CD4-positive, alpha-beta memory T cell (primary cell): ENCODE measurements at regions of chr10 and their contacts with region 1.

Region 1: GRCh38 chr10:13099666-13100348 is at the start of gene OPTN:
- DNase-seq: peak; percentile 82 to 90 (median 84)
- H3K4me3 ChIP-seq: peak within 1 kb of the TSS; percentile 58 to 65
- H3K4me3 Mint-ChIP-seq: peak within 1 kb of the TSS; percentile 89 to 95 (median 94)
- H3K27ac ChIP-seq: peak within 1 kb of the TSS; percentile 98
- H3K27ac Mint-ChIP-seq: peak within 1 kb of the TSS; percentile 95 to 98 (median 97)
- H3K4me1 ChIP-seq: peaks cover 49% of the 10 kb centered on the region
- H3K4me1 Mint-ChIP-seq: peaks cover 40 to 59% (median 48%) of the 10 kb centered on the region in 4 donors
- H3K27me3 ChIP-seq: no peaks in the 10 kb centered on the region
- H3K27me3 Mint-ChIP-seq: no peaks in the 10 kb centered on the region
- total RNA-seq, gene OPTN: 148 TPM

Region 2: DNA sequence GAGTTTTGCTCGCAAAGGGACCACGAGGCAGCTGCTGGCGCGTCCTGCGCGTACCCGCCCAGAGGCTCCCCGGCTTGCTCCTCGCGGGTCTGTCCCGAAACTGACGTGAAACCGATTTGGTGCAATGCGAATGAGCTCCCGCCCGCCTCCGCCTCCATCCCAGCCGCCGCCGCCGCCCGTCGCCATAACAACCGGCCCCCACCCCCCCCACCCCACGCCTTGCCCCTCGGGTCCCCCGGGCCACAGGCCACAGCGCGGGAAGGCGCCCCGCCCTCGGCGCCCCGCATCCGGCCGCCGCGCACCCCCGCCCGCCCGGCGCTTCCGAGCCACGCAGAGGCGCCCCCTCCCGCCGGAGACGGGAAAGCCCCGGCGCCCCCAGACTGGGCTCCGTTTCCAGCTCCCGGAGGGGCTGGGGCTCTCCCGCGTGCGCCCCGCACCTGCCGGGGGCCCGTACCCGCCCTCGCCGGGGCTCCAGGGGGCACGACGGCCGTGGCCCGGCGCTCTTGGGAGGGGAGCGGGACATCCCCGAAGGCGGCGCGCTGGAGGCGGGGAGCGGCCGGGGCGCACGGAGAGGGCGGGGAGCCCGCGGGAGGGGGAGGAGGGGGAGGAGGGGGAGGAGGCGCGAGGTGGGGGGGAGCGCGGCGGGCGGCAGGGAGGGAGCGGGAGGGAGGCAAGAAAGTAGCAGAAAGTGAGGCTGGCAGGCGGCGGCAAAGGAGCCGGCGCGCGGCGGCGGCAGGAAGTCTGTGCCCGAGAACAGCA is 750.8 kb before region 1 on chr10 and contains the start of gene CAMK1D:
- CTCF ChIA-PET with region 1: no interaction called
- POLR2A ChIA-PET with region 1: no interaction called
- intact Hi-C with region 1: loop called (anchors 10 kb)
- DNase-seq: peak; percentile 91 to 94 (median 92)
- H3K4me3 ChIP-seq: peak within 1 kb of the TSS; percentile 40 to 72
- H3K4me3 Mint-ChIP-seq: peak within 1 kb of the TSS; percentile 93 to 100 (median 97)
- H3K27ac ChIP-seq: peak within 1 kb of the TSS; percentile 71
- H3K27ac Mint-ChIP-seq: peak within 1 kb of the TSS; percentile 98 to 99 (median 98)
- H3K4me1 ChIP-seq: peaks cover 25% of the 10 kb centered on the region
- H3K4me1 Mint-ChIP-seq: peaks cover 31 to 54% (median 41%) of the 10 kb centered on the region in 4 donors
- H3K27me3 ChIP-seq: no peaks in the 10 kb centered on the region
- H3K27me3 Mint-ChIP-seq: peaks cover 0 to 6% of the 10 kb centered on the region in 2 donors
- total RNA-seq, gene CAMK1D: 21.9 to 22.2 TPM

Region 3: DNA sequence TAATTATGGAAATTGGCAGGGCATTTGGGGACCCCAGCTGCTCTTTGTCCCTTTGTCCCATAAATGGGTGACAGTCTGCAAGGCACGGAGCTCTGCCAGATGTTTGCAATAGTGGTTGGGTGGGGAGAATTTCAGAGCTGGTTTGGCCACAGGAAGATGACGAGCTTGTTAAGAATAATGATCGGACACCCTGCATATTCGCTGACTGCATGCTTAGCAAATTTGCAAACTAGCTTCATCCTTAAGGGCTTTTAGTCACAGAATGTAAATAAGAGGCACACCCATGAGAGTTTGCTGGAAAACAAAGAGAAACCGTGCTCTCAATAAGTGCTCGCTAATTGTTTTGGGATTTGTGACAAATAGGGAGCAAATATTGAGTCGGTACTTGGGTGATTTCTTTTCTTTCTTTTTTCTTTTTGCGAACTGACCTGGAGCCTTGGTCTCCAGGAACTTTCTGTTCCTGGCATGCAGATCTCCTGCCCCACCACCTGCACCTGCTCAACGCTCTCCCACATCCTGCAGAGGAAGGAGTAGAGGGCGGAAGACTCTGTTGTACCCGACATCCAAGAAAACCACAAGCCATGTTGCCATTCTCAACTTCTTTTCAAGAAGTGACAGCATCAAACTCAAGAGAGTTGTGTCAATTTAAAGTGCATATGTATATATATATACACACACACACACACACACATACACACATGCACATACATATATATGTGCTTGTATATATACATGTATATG is 511.5 kb before region 1 on chr10:
- CTCF ChIA-PET with region 1: no interaction called
- POLR2A ChIA-PET with region 1: no interaction called
- intact Hi-C with region 1: no loop called
- DNase-seq: peak; percentile 40 to 58 (median 54)
- H3K4me3 ChIP-seq: no peak overlapping the region
- H3K4me3 Mint-ChIP-seq: peak overlapping the region; percentile 84 to 95 (median 88)
- H3K27ac ChIP-seq: peak overlapping the region; percentile 21
- H3K27ac Mint-ChIP-seq: peak overlapping the region; percentile 85 to 91 (median 87)
- H3K4me1 ChIP-seq: peaks cover 30% of the 10 kb centered on the region
- H3K4me1 Mint-ChIP-seq: peaks cover 49 to 75% (median 61%) of the 10 kb centered on the region in 4 donors
- H3K27me3 ChIP-seq: no peaks in the 10 kb centered on the region
- H3K27me3 Mint-ChIP-seq: no peaks in the 10 kb centered on the region

Region 4: GRCh38 chr10:12656518-12657142 is 443.2 kb before region 1 on chr10:
- CTCF ChIA-PET with region 1: no interaction called
- POLR2A ChIA-PET with region 1: no interaction called
- intact Hi-C with region 1: loop called (anchors 5 kb)
- DNase-seq: peak in 4 of 5 donors; percentile 56 to 64 (median 60)
- H3K4me3 ChIP-seq: no peak overlapping the region
- H3K4me3 Mint-ChIP-seq: no peak overlapping the region
- H3K27ac ChIP-seq: no peak overlapping the region
- H3K27ac Mint-ChIP-seq: no peak overlapping the region
- H3K4me1 ChIP-seq: no peaks in the 10 kb centered on the region
- H3K4me1 Mint-ChIP-seq: peaks cover 2 to 15% (median 7%) of the 10 kb centered on the region in 4 donors
- H3K27me3 ChIP-seq: no peaks in the 10 kb centered on the region
- H3K27me3 Mint-ChIP-seq: no peaks in the 10 kb centered on the region

Region 5: GRCh38 chr10:12902135-12902572 is 197.7 kb before region 1 on chr10:
- CTCF ChIA-PET with region 1: no interaction called
- POLR2A ChIA-PET with region 1: no interaction called
- intact Hi-C with region 1: loop called (anchors 2 kb)
- DNase-seq: peak in 4 of 5 donors; percentile 25 to 43 (median 32)
- H3K4me3 ChIP-seq: no peak overlapping the region
- H3K4me3 Mint-ChIP-seq: no peak overlapping the region
- H3K27ac ChIP-seq: no peak overlapping the region
- H3K27ac Mint-ChIP-seq: no peak overlapping the region
- H3K4me1 ChIP-seq: no peaks in the 10 kb centered on the region
- H3K4me1 Mint-ChIP-seq: no peaks in the 10 kb centered on the region
- H3K27me3 ChIP-seq: no peaks in the 10 kb centered on the region
- H3K27me3 Mint-ChIP-seq: peaks cover 0 to 18% of the 10 kb centered on the region in 2 donors

Region 6: GRCh38 chr10:13056456-13057077 is 43.2 kb before region 1 on chr10:
- CTCF ChIA-PET with region 1: no interaction called
- POLR2A ChIA-PET with region 1: no interaction called
- intact Hi-C with region 1: no loop called
- DNase-seq: no peak
- H3K4me3 ChIP-seq: no peak overlapping the region
- H3K4me3 Mint-ChIP-seq: no peak overlapping the region
- H3K27ac ChIP-seq: no peak overlapping the region
- H3K27ac Mint-ChIP-seq: no peak overlapping the region
- H3K4me1 ChIP-seq: no peaks in the 10 kb centered on the region
- H3K4me1 Mint-ChIP-seq: no peaks in the 10 kb centered on the region
- H3K27me3 ChIP-seq: no peaks in the 10 kb centered on the region
- H3K27me3 Mint-ChIP-seq: peaks cover 6 to 11% of the 10 kb centered on the region in 2 donors

Region 7: DNA sequence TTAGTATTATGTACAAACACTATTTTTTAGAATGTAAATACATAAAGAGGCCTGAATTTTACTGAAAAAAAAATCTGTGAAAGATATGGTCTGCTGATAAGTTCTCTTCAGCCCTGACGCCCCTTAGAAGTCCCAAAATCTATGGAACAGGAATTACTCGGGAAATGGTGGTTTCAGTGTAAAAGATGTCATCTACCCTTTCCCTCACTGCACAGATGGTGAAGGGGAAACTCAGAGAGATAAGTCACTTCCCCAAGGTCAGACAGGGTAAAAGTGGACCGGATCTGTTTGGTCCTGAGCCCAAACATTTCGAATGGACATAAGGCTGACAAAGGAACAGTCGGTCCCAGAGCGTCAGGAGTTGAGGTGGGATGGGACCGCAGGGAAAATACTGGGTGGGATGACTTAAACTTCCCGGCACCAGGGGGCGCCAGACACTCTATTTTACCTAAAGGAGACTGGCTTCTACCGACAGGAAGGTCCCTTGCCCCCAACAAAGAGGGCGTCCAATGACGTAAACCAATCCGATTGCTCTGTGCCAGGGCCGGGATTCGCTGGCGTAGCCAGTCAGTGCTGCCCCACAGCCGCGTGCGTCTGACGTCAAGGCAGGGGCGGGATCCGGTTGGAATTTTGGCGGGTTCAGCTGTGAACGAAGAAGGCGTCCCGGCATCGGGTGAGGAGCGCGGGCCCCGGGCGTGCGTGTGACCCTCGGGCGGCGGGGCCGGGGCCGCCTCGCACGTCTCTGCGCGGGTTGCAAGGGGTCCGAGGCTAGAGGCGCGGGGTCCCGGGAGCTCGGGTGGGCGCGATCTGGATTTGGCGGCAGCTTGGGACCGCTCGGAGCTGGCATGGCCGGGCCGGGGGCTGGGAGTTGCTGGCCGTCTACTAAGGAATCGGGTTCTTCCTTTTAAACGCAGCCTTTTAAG is 61.4 kb after region 1 on chr10 and contains the start of gene MCM10:
- CTCF ChIA-PET with region 1: interaction called, 6 read pairs
- POLR2A ChIA-PET with region 1: no interaction called
- intact Hi-C with region 1: loop called (anchors 1 kb)
- DNase-seq: peak; percentile 95 to 99 (median 97)
- H3K4me3 ChIP-seq: peak within 1 kb of the TSS; percentile 50 to 58
- H3K4me3 Mint-ChIP-seq: peak within 1 kb of the TSS; percentile 82 to 94 (median 88)
- H3K27ac ChIP-seq: peak within 1 kb of the TSS; percentile 33
- H3K27ac Mint-ChIP-seq: peak within 1 kb of the TSS; percentile 82 to 94 (median 88)
- H3K4me1 ChIP-seq: peaks cover 15% of the 10 kb centered on the region
- H3K4me1 Mint-ChIP-seq: peaks cover 15 to 36% (median 23%) of the 10 kb centered on the region in 4 donors
- H3K27me3 ChIP-seq: no peaks in the 10 kb centered on the region
- H3K27me3 Mint-ChIP-seq: no peaks in the 10 kb centered on the region
- total RNA-seq, gene MCM10: 0.17 TPM in 1 of 2 experiments, not detected in the other

Region 8: GRCh38 chr10:13348216-13349017 is 248.6 kb after region 1 on chr10 and contains the start of gene SEPHS1:
- CTCF ChIA-PET with region 1: interaction called, 3 read pairs
- POLR2A ChIA-PET with region 1: interaction called, 5 read pairs
- intact Hi-C with region 1: loop called (anchors 5 kb)
- DNase-seq: peak; percentile 79 to 87 (median 80)
- H3K4me3 ChIP-seq: peak within 1 kb of the TSS; percentile 89 to 93
- H3K4me3 Mint-ChIP-seq: peak within 1 kb of the TSS; percentile 94 to 97 (median 96)
- H3K27ac ChIP-seq: peak within 1 kb of the TSS; percentile 75
- H3K27ac Mint-ChIP-seq: peak within 1 kb of the TSS; percentile 88 to 97 (median 96)
- H3K4me1 ChIP-seq: peaks cover 50% of the 10 kb centered on the region
- H3K4me1 Mint-ChIP-seq: peaks cover 33 to 76% (median 51%) of the 10 kb centered on the region in 4 donors
- H3K27me3 ChIP-seq: no peaks in the 10 kb centered on the region
- H3K27me3 Mint-ChIP-seq: no peaks in the 10 kb centered on the region
- total RNA-seq, gene SEPHS1: 27.2 to 30.6 TPM